ENCODE measurements at regions of chr18 and their contacts with region 1.

Region 1: GRCh38 chr18:11733031-11733430 is 44.0 kb downstream of the GNAL start:
- DNase-seq: peak; percentile 70 to 84
- H3K4me3 ChIP-seq: no peak overlapping the region
- H3K27ac ChIP-seq: no peak overlapping the region
- H3K4me1 ChIP-seq: no peaks in the 10 kb centered on the region
- H3K27me3 ChIP-seq: peaks cover 0 to 2% of the 10 kb centered on the region in 2 donors
- CTCF ChIP-seq: peak; percentile 71 to 88

Region 2: DNA sequence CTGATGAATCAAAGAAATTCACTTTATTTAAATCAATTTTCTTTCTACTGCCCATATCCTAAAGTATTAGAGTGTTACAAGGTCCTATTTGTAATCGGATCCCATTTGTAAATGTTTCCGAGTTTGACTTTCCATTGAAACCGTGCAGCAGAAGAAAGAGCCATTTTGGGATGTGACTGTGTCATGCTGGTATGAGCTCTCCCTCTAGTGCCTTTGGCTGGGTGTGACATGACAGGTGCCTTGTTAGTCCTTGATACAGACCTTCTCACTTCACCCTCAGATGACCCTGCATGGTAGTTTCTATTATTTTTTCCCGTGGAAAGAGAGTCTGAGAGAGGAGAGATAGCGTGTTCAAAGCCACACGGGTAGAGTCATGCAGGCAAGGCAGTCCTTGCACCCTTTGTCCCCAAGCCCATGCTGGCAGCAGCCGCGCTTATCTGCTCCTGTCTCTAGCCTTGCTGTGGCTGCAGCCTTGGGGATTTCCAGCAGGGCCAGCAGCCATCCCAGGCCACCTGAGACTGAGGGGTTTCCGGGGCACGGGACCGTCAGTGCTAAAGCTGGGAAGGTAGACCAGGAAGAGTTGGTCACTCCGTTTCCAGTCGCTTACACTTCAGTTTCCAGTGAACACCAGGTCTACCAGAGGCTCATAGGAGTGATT is 139.6 kb after region 1 on chr18:
- intact Hi-C with region 1: loop called (anchors 10 kb)
- DNase-seq: peak in 1 of 2 donors; percentile 56
- H3K4me3 ChIP-seq: no peak overlapping the region
- H3K27ac ChIP-seq: no peak overlapping the region
- H3K4me1 ChIP-seq: no peaks in the 10 kb centered on the region
- H3K27me3 ChIP-seq: no peaks in the 10 kb centered on the region
- CTCF ChIP-seq: peak in 1 of 2 experiments; percentile 24

Region 3: GRCh38 chr18:12038639-12039417 is 305.8 kb after region 1 on chr18:
- intact Hi-C with region 1: loop called (anchors 10 kb)
- DNase-seq: peak; percentile 79 to 88
- H3K4me3 ChIP-seq: peak overlapping the region; percentile 52 to 68
- H3K27ac ChIP-seq: peak overlapping the region; percentile 11 to 45
- H3K4me1 ChIP-seq: peaks cover 0 to 13% (median 10%) of the 10 kb centered on the region in 4 donors
- H3K27me3 ChIP-seq: no peaks in the 10 kb centered on the region
- CTCF ChIP-seq: peak; percentile 96 to 98